ENCODE measurements at regions of chr5 and their contacts with region 1.

Region 1: DNA sequence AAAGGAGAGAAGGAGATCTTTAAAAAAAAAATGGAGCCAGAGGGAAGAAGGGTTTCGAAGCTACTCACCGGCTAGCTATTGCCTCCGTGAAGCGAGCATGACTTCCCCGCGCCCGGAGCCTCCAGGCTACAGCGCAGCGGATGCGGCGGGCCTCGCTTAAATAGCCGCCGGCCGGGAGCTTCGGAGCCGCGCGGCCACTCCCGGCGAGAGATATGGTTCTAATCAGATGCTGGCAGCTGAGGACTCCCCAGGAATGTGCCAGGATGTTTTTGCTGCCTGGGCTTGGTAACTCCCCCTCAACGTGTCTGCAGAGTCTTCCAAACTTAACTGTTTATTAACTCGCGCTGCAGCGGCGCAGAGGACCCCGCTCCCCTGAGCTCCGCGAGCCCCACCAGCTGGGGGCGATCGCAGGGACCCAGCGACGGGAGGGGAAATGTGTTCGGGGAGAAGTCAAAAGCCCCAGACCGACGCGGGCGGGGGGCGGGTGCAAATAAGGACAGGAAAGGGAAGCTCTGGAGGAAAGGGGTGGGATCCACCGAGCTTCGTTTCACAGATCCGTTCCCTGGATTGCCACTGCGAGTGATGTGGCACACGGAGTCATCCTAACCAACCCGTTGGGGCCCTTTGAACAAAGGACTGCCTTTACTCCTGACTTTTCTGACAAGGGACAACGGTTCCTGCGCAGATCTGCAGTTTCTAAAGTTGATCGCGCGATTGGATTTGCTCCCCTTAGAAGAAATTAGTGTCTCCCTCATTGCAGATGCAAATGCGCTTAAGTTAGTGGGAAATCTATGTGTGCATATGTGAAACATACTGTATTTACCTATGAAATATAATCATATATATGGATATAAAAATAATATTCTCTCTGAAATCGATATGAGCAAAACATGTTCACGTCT is at the start of gene DAB2:
- DNase-seq: peak; percentile 92 to 95
- ATAC-seq: peak; percentile 89
- H3K4me3 ChIP-seq: peak within 1 kb of the TSS; percentile 83 to 97
- H3K27ac ChIP-seq: peak within 1 kb of the TSS; percentile 55 to 57
- H3K4me1 ChIP-seq: peaks cover 5 to 7% of the 10 kb centered on the region in 2 donors
- H3K27me3 ChIP-seq: no peaks in the 10 kb centered on the region
- total RNA-seq, gene DAB2: 119 to 255 TPM

Region 2: GRCh38 chr5:38938424-38938823 is 486.6 kb before region 1 on chr5:
- intact Hi-C with region 1: no loop called
- DNase-seq: no peak
- ATAC-seq: no peak
- H3K4me3 ChIP-seq: no peak overlapping the region
- H3K27ac ChIP-seq: no peak overlapping the region
- H3K4me1 ChIP-seq: no peaks in the 10 kb centered on the region
- H3K27me3 ChIP-seq: no peaks in the 10 kb centered on the region

Region 3: GRCh38 chr5:39209924-39210323 is 215.1 kb before region 1 on chr5:
- intact Hi-C with region 1: no loop called
- DNase-seq: peak in 1 of 2 donors; percentile 55
- ATAC-seq: no peak
- H3K4me3 ChIP-seq: no peak overlapping the region
- H3K27ac ChIP-seq: no peak overlapping the region
- H3K4me1 ChIP-seq: no peaks in the 10 kb centered on the region
- H3K27me3 ChIP-seq: no peaks in the 10 kb centered on the region

Region 4: DNA sequence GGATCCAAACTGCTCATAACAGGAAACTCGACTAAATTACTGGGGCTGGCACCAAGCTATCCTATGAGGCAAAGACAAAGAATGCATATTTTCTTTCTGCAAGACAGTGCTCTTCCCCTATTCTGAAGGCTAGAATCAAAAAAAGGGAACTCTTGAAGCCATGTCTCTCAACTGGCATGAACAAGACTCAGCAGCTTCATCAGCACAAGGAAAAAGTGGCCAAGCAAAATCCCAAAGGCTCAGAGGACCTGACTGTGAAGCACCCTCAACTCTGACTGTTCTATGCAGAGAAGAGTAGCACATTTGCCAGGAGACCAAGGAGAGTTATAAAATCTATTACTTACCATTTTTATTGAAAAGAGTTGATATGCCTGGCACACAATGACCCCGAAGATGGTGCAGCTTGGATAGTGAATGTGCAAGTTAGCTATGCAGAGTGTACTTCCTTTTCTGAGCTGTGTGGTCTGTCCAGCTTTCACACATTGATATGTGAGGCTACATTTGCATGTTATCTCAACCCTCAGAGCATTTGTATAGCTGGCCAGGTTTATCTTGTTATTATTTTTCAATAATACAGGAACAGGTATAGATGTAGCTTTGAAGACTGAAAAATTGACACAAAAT is 154.7 kb before region 1 on chr5:
- intact Hi-C with region 1: no loop called
- DNase-seq: no peak
- ATAC-seq: peak; percentile 37
- H3K4me3 ChIP-seq: no peak overlapping the region
- H3K27ac ChIP-seq: no peak overlapping the region
- H3K4me1 ChIP-seq: no peaks in the 10 kb centered on the region
- H3K27me3 ChIP-seq: no peaks in the 10 kb centered on the region

Region 5: GRCh38 chr5:39399135-39400036 is 25.6 kb before region 1 on chr5:
- intact Hi-C with region 1: loop called (anchors 1 to 5 kb)
- DNase-seq: no peak
- ATAC-seq: peak; percentile 89
- H3K4me3 ChIP-seq: no peak overlapping the region
- H3K27ac ChIP-seq: peak overlapping the region; percentile 28 to 67
- H3K4me1 ChIP-seq: peaks cover 0 to 10% of the 10 kb centered on the region in 2 donors
- H3K27me3 ChIP-seq: no peaks in the 10 kb centered on the region

Region 6: GRCh38 chr5:39547553-39548154 is 122.7 kb after region 1 on chr5:
- intact Hi-C with region 1: loop called (anchors 5 to 10 kb)
- DNase-seq: no peak
- ATAC-seq: peak; percentile 76
- H3K4me3 ChIP-seq: no peak overlapping the region
- H3K27ac ChIP-seq: no peak overlapping the region
- H3K4me1 ChIP-seq: no peaks in the 10 kb centered on the region
- H3K27me3 ChIP-seq: no peaks in the 10 kb centered on the region